ENCODE measurements at regions of chr11 and their contacts with region 1.

Region 1: DNA sequence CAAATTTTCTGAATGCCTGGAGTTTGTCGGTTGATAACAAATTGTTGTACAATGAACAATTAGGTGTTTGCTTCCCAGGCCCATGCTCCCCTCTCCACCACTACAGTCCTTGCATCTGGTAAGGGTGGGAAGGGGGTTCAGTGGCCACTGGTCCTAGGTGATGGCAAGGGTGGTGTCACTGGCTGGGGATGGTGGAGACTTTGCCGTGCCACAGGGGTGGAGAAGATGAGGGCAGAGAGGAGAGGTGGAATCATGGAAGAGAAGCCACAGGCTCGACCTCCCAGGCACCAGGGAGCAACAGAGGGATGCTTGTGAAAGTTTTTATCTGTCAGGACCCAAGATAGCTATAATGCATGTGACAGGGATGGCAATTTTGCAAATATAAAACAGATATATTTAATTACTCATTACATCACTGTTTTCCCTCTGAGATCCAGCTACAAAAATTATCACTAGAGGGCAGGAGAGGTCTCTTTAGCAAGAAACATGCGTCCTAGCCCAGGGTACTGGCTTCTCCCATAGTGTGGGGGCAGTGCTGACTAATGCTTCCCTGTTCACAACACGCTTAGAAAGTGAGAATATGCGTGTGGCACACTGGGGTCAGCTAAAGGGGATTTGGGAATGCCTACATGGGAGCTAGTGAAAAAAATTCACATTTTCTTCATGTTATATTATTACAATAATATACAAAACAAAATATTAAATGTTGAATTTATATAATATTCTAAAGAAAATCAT is 49.0 kb upstream of the AMPD3 start:
- DNase-seq: peak in 4 of 5 donors; percentile 75 to 78 (median 76)
- ATAC-seq: peak; percentile 80 to 95 (median 92)
- H3K4me3 ChIP-seq: no peak overlapping the region
- H3K27ac ChIP-seq: no peak overlapping the region
- H3K4me1 ChIP-seq: peaks cover 0 to 34% (median 4%) of the 10 kb centered on the region in 12 donors
- H3K27me3 ChIP-seq: no peaks in the 10 kb centered on the region
- CTCF ChIP-seq: peak; percentile 57 to 85 (median 76)
- POLR2A ChIP-seq: no peak

Region 2: GRCh38 chr11:10272132-10272531 is 133.9 kb before region 1 on chr11:
- intact Hi-C with region 1: no loop called
- DNase-seq: no peak
- ATAC-seq: no peak
- H3K4me3 ChIP-seq: no peak overlapping the region
- H3K27ac ChIP-seq: no peak overlapping the region
- H3K4me1 ChIP-seq: peaks cover 0 to 25% (median 1%) of the 10 kb centered on the region in 12 donors
- H3K27me3 ChIP-seq: no peaks in the 10 kb centered on the region
- CTCF ChIP-seq: no peak
- POLR2A ChIP-seq: no peak

Region 3: DNA sequence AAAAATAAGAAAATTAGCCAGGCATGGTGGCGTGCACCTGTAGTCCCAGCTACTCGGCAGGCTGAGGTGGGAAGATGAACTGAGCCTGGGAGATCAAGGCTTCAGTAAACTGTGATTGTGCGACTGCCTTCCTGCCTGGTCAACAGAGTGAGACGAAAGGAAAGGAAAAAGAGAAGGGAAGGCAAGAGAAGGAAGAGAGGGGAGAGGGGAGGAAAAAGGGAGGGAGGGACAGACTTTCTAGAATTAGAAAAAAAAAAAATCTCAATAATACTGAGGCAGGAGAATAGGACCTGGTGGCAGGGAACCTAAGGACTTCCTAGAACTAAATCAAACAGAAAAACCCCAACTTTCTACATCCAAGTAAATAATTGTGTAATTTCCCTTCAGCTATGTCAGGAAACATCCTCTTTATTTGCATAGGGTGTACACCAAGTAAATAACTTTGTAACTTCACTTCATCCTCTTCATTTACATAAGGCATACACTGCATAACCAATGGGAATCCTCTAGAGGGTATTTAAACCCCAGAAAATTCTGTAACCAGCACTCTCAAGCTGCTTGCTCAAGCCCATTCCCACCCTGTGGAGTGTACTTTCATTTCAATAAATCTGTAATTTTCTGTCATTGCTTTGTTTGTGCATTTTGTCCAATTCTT is 120.7 kb before region 1 on chr11:
- intact Hi-C with region 1: no loop called
- DNase-seq: no peak
- ATAC-seq: peak in 1 of 4 donors; percentile 8
- H3K4me3 ChIP-seq: no peak overlapping the region
- H3K27ac ChIP-seq: peak overlapping the region in 1 of 12 donors; percentile 52
- H3K4me1 ChIP-seq: peaks cover 0 to 52% (median 5%) of the 10 kb centered on the region in 12 donors
- H3K27me3 ChIP-seq: no peaks in the 10 kb centered on the region
- CTCF ChIP-seq: no peak
- POLR2A ChIP-seq: no peak

Region 4: DNA sequence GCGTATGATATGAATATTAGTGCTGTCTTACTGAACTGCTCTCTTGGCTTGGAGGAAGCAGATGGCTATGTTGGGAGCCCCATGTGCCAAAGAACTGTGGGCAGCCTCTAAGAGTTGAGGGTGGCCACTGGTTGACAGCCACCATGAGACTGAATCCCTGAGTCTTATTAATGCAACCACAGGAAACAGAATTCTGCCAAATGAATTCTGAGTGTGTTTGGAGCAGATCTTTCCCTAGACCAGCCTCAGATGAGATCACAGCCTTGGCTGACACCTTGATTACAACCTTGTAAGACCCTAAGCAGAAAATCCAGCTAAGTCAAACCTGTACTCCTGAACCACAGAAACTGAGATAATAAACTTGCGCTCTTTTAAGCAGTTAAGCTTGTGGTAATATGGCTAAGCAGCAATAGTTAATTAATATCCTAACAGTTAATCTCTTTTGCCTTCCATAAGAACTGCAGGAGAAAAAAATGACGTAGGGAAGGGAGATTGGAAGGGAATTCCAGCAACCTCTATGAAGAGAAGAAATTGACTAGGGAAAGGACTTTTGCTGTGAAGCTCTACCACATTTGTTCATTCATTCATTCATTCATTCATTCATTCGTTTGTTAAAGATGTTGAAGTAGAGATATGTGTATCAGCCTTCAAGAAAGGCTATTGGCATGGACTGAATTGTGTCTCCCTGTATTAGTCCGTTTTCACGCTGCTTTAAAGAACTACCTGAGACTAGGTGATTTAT is 74.3 kb before region 1 on chr11:
- intact Hi-C with region 1: no loop called
- DNase-seq: no peak
- ATAC-seq: no peak
- H3K4me3 ChIP-seq: no peak overlapping the region
- H3K27ac ChIP-seq: no peak overlapping the region
- H3K4me1 ChIP-seq: peaks cover 0 to 35% (median 17%) of the 10 kb centered on the region in 12 donors
- H3K27me3 ChIP-seq: no peaks in the 10 kb centered on the region
- CTCF ChIP-seq: no peak
- POLR2A ChIP-seq: no peak

Region 5: DNA sequence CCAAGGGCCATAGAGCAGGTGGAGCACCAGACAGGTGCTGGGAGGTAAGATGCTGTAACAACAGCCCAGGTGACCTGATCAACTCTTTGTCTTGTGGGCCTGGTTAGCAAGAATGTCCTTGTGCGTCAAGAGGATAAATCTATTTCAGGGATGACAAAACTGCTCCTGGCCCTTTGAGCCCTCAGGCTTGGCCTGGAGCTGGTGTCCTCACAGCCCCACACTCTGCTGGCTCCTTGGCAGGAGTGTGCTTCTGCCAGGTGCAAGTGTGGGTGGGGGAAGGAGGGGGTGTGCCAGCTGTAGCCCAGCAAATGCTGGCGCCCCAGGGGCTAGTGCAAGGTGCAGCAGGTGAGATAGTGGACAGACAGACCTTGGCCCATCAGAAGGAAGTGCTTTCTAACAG is 68.5 kb after region 1 on chr11:
- intact Hi-C with region 1: no loop called
- DNase-seq: no peak
- ATAC-seq: no peak
- H3K4me3 ChIP-seq: no peak overlapping the region
- H3K27ac ChIP-seq: no peak overlapping the region
- H3K4me1 ChIP-seq: no peaks in the 10 kb centered on the region
- H3K27me3 ChIP-seq: no peaks in the 10 kb centered on the region
- CTCF ChIP-seq: no peak
- POLR2A ChIP-seq: no peak

Region 6: DNA sequence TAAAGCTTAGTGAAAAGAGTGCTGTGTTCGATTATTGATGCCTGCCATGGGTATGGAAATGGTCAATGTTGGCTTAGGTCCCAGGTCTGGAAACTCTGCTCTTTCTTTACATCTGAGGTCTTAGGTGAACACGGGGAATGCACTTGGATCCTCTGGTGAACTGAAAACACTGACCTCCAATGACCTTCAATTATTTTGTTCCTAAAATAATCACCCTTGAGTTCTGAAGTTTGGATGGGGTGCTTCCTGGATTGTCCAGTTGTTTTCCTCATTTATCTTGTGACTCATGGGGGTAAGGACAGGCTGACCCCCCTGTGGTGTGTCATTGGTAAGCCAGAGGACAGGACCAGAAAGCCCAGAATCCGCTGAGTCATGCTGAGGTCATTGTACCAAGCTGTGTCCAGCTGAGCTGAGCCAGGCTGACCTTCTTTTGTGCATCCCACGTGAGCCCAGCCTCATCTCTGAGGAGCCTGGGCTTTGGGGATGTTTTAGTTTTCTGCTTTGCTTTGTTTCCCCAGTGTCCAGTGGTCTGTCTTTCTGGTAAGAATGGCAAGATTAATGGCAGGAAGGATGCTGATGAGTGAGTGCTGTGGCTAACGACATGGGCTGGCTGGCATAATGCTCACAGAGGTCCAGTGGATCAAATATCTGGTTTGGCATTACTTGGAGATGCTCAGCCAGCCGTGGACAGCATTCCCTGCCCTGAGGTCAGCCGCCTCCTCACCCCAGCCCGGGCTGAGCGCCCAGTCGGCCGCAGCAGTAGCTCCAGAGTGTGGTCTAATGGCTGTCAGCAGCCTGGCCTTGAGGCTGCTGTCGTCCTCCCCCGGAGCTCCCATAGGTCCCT is 84.6 kb after region 1 on chr11:
- intact Hi-C with region 1: loop called in 1 of 10 experiments (anchors 10 kb)
- DNase-seq: peak; percentile 60 to 88 (median 73)
- ATAC-seq: peak; percentile 64 to 94 (median 86)
- H3K4me3 ChIP-seq: no peak overlapping the region
- H3K27ac ChIP-seq: peak overlapping the region in 6 of 12 donors; percentile 9 to 67 (median 52)
- H3K4me1 ChIP-seq: peaks cover 0 to 20% (median 6%) of the 10 kb centered on the region in 12 donors
- H3K27me3 ChIP-seq: no peaks in the 10 kb centered on the region
- CTCF ChIP-seq: no peak
- POLR2A ChIP-seq: no peak

Region 7: DNA sequence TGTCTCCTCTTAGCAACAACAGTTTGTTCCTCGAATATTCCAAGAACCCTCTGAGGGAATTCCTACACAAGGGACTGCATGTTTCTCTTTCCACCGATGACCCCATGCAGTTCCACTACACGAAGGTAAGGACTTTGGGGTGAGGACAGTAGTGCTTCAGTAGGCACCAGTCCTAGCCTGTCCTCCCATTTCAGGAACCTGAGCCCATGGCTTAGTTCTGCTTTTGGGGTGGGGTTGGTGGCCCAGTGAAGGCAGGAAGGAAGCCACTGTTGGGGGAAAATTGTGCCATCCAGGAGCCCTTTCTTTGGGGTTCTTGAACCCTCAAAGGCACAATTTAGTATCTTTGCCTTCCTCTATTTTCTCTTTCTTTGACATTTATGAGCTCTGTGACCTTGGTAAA is 96.7 kb after region 1 on chr11:
- intact Hi-C with region 1: loop called in 2 of 10 experiments (anchors 10 kb)
- DNase-seq: peak in 1 of 5 donors; percentile 38
- ATAC-seq: peak; percentile 2 to 68 (median 48)
- H3K4me3 ChIP-seq: no peak overlapping the region
- H3K27ac ChIP-seq: peak overlapping the region in 2 of 12 donors; percentile 27 to 90
- H3K4me1 ChIP-seq: peaks cover 0 to 25% (median 0%) of the 10 kb centered on the region in 12 donors
- H3K27me3 ChIP-seq: no peaks in the 10 kb centered on the region
- CTCF ChIP-seq: no peak
- POLR2A ChIP-seq: no peak

Region 8: GRCh38 chr11:10514210-10514609 is 108.2 kb after region 1 on chr11:
- intact Hi-C with region 1: loop called in 6 of 10 experiments (anchors 5 to 10 kb)
- DNase-seq: no peak
- ATAC-seq: no peak
- H3K4me3 ChIP-seq: no peak overlapping the region
- H3K27ac ChIP-seq: no peak overlapping the region
- H3K4me1 ChIP-seq: peaks cover 0 to 10% (median under 1%) of the 10 kb centered on the region in 12 donors
- H3K27me3 ChIP-seq: no peaks in the 10 kb centered on the region
- CTCF ChIP-seq: peak in 11 of 12 donors; percentile 16 to 57 (median 42)
- POLR2A ChIP-seq: no peak

Region 9: DNA sequence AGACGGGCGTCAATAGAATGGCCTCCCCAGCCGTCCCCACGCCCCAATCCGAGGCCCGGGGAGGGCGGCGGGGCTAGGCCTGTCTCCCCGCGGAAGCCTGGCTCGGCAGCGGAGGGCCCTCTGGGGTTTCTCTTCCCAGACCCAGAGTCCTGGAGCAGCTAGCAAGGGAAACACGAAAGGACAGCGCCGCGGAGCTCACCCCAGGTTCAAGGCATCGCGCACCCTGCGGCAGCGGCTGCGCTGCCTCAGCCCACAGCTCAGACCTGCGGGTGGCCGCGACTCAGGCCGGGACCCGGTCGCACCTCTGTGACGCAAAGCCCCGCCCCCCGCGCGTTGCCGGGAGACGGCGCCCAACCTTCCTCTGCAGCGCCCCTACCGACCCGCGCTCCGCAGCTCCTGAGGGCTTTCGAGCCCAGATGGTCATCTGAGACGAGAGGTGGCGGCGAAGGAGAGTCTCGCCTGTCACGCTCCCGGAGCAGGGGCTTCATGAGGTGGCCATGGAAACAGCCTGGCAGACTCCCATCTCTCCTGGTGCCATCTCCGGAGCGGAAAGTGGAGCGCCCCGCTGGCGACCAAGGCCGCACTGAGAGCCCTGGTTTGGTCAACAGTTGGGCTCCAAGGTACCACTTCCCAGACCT is 135.0 kb after region 1 on chr11 and contains the start of gene RNF141:
- intact Hi-C with region 1: loop called in 1 of 10 experiments (anchors 10 kb)
- DNase-seq: peak; percentile 95 to 98 (median 96)
- ATAC-seq: peak; percentile 98 to 100 (median 100)
- H3K4me3 ChIP-seq: peak within 1 kb of the TSS; percentile 69 to 94 (median 80)
- H3K27ac ChIP-seq: peak within 1 kb of the TSS; percentile 35 to 94 (median 87)
- H3K4me1 ChIP-seq: peaks cover 0 to 28% (median 7%) of the 10 kb centered on the region in 12 donors
- H3K27me3 ChIP-seq: no peaks in the 10 kb centered on the region
- CTCF ChIP-seq: peak; percentile 70 to 94 (median 86)
- POLR2A ChIP-seq: peak in 1 of 2 donors; percentile 88
- total RNA-seq, gene RNF141: 18.8 to 42.8 (median 36.5) TPM

Region 10: DNA sequence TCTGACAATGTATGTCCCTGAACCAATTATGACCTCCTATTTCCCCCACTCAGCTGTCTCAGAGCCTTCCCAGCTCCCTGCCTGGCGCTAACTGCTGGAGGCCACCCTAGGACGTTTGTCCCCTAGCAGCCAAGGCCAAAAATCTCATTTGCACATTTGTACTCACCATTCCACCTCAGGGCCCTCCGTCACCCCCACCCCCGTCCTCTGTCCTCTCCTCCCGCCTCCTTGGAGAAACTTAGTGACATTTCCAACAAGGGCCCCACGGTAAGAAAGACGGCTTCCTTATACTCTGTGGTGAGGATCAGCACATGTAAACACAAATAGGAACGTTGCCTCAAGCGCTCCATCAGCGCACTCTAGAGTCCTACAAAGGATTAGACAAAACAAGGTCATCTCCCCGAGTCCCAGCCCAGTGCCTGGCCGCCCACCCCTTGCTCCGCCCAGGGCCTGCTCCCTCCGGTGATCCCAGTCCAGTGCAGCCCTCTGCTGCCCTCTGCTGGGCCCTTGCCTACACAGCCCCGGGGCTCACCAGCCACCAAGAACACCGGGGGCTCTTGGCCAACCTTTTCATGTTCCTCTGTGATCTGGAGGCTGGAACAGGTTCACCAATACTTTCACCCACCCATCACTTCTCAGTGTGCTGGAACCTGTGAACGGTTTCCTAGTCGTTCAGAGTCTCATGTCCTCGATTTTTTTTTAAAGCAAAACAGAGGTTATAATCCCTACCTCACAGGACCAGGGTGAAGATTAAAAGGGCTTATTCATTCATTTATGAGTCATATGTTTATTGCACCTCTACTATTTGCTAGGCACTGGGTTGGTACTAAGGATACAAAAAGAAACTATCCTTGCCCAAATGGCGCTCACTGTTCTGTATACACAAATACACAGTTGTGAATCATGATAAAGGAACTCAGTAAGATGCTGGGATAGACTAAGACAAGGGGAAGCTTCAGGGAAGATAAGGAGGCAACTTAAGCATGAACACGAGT is 329.8 kb after region 1 on chr11:
- intact Hi-C with region 1: loop called (anchors 1 to 5 kb)
- DNase-seq: peak; percentile 93 to 98 (median 96)
- ATAC-seq: peak; percentile 99 to 100 (median 100)
- H3K4me3 ChIP-seq: peak overlapping the region in 10 of 12 donors; percentile 6 to 45 (median 28)
- H3K27ac ChIP-seq: peak overlapping the region in 10 of 12 donors; percentile 17 to 75 (median 66)
- H3K4me1 ChIP-seq: peaks cover 0 to 13% (median 5%) of the 10 kb centered on the region in 12 donors
- H3K27me3 ChIP-seq: no peaks in the 10 kb centered on the region
- CTCF ChIP-seq: peak; percentile 97 to 100 (median 99)
- POLR2A ChIP-seq: no peak